Activated CD8-positive, alpha-beta T cell treated with anti-CD3 and anti-CD28 coated beads, Interleukin-2, amount 10 ng/mL, durations not matched to agents 7 days and 5 days (primary cell): ENCODE measurements at regions of chr5 and their contacts with region 1.

Region 1: DNA sequence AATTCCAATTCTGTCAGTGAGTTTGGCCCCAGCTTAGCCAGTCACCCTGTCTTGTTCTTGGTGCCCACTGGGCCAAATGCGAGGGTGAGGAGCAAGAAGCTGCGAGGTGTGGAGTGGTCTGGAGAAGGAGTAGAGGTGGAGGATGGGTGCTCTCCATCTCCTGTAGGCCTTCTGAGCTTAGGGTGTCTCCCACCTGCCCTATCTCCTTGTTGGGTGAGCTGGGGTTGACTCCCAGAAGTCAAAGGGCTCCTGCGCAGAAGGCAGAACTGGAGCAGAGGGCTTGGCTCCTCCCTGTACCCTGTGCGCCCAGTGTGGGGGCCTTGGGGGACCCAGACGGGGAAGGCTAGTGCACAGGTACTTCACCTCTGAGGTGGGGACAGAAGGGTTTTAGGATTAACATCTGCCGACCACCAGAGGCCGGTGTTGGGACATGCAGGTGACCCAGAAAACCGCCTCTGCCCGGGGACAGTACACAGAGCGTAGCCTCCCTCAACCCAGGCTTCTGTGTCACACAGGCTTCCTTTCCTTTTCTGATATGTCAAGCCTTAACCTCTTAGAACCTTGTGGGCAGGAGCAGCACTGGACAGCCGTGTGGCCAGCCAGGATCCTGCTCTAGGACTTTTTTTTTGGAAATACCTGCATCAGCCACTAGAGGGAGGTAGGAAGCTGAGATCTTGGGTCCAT is 16.9 kb downstream of the IL5 start:
- DNase-seq: peak; percentile 54
- ATAC-seq: peak; percentile 70
- H3K4me3 Mint-ChIP-seq: no peak overlapping the region
- H3K27ac Mint-ChIP-seq: peak overlapping the region; percentile 48
- H3K4me1 Mint-ChIP-seq: peaks cover 46% of the 10 kb centered on the region
- H3K27me3 Mint-ChIP-seq: no peaks in the 10 kb centered on the region

Region 2: GRCh38 chr5:132473019-132473531 is 53.4 kb before region 1 on chr5:
- CTCF ChIA-PET with region 1: no interaction called
- POLR2A ChIA-PET with region 1: no interaction called
- DNase-seq: peak; percentile 95
- ATAC-seq: peak; percentile 63
- H3K4me3 Mint-ChIP-seq: peak overlapping the region; percentile 42
- H3K27ac Mint-ChIP-seq: peak overlapping the region; percentile 94
- H3K4me1 Mint-ChIP-seq: peaks cover 92% of the 10 kb centered on the region
- H3K27me3 Mint-ChIP-seq: no peaks in the 10 kb centered on the region

Region 3: DNA sequence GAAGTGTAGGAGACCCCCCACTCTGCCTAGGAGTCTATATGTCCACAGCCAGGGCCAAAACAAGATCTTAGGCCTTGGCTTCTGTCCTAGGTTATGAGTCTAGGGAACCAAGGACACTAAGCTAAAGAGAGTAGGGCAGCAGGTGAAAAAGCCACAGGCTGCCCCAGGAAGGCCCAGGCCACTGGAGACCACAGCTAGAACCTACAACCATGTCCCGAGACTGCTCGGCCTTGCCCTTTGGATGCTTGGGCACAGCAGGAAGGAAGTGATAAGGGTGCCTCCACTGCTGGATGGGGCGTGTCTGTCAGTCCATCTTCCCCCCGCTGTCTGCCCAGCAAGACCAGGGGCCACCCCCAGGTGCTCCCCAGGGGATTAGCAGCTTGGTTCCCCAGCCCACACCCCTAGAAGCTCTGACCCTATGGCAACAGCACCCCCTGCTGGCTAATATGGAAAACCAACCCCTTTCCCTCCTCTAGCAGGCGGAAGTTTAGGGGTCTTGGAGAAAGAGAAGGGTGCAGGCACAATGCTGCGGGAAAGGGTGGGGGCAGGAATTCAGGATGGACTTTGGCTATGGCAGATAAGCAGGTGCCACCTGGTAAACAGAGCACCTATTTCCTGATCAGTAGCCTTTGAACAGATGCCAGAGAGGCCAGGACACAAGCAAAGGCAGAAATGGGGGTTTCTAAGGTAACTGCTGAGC is 25.4 kb before region 1 on chr5:
- CTCF ChIA-PET with region 1: interaction called, 15 read pairs
- POLR2A ChIA-PET with region 1: interaction called, 3 read pairs
- DNase-seq: peak; percentile 85
- ATAC-seq: peak; percentile 25
- H3K4me3 Mint-ChIP-seq: no peak overlapping the region
- H3K27ac Mint-ChIP-seq: peak overlapping the region; percentile 81
- H3K4me1 Mint-ChIP-seq: peaks cover 45% of the 10 kb centered on the region
- H3K27me3 Mint-ChIP-seq: peaks cover 5% of the 10 kb centered on the region

Region 4: GRCh38 chr5:132540764-132541163 is 14.3 kb after region 1 on chr5:
- CTCF ChIA-PET with region 1: interaction called, 27 read pairs
- POLR2A ChIA-PET with region 1: no interaction called
- DNase-seq: no peak
- ATAC-seq: no peak
- H3K4me3 Mint-ChIP-seq: no peak overlapping the region
- H3K27ac Mint-ChIP-seq: no peak overlapping the region
- H3K4me1 Mint-ChIP-seq: peaks cover 15% of the 10 kb centered on the region
- H3K27me3 Mint-ChIP-seq: peaks cover 3% of the 10 kb centered on the region

Region 5: DNA sequence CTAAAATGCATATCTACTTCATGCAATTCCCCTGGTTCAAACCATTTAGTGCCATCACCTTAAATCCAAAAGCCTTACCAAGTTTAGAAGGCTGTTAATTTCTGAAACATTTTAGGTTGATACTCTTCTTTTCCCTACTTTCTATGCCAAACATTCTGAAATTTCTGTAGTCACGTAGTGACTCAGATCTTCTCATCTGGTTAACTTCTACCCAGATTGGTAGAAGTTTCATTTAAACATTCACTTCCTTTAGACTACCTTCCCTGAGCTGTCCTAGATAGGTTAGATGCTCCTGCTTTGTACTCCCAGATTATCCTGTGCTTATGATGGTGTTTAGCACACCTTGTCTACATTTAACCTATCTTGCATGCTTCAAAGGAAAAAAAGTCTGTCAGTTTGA is 40.2 kb after region 1 on chr5:
- CTCF ChIA-PET with region 1: interaction called, 15 read pairs
- POLR2A ChIA-PET with region 1: no interaction called
- DNase-seq: no peak
- ATAC-seq: no peak
- H3K4me3 Mint-ChIP-seq: no peak overlapping the region
- H3K27ac Mint-ChIP-seq: peak overlapping the region; percentile 11
- H3K4me1 Mint-ChIP-seq: peaks cover 9% of the 10 kb centered on the region
- H3K27me3 Mint-ChIP-seq: no peaks in the 10 kb centered on the region

Region 6: DNA sequence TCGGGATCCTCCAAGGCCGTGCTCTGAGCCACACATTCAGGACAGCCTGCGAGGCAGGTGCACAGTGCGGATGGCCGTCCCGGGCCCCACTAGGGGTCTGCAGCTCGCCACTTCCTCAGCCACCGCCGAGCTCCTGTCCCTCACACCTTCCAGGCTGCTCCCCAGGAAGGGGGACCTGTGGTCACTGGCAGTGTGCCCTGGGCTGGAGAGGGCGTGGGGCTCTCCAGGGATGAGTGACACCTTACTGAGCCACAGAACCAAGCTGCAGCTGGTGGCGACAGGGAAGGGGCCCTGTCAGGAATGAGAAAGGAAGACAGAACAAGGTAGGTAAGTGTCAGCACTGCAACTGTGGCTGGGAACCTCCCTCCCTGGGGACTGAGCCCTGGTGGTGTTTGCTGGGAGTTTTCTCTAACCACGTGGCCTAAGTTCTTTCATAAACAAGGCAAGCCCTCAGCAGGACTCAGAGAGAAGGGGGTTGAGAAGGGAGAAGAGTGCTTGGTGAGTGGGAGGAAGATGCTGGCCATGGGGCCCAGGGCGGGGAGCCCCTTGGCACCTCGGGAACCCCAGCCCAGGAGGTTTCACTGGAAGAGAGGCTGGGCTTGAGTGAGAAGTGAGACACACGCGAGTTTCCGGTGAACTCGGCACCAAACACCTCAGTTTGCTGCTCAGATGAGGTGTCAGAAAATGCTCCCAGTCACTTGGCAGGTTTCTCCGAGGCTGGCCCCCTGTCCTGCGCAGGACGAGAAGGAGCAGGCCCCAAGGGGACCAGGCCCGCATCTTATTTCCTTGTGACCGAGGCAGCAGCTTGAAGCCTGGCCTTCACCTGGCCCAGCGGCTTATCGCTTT is 136.7 kb after region 1 on chr5:
- CTCF ChIA-PET with region 1: interaction called, 10 read pairs
- POLR2A ChIA-PET with region 1: no interaction called
- DNase-seq: peak; percentile 43
- ATAC-seq: peak; percentile 56
- H3K4me3 Mint-ChIP-seq: no peak overlapping the region
- H3K27ac Mint-ChIP-seq: peak overlapping the region; percentile 84
- H3K4me1 Mint-ChIP-seq: peaks cover 51% of the 10 kb centered on the region
- H3K27me3 Mint-ChIP-seq: no peaks in the 10 kb centered on the region

Region 7: GRCh38 chr5:132736853-132737833 is 210.7 kb after region 1 on chr5 and contains the start of gene KIF3A:
- CTCF ChIA-PET with region 1: interaction called, 15 read pairs
- POLR2A ChIA-PET with region 1: no interaction called
- DNase-seq: peak; percentile 99
- ATAC-seq: peak; percentile 94
- H3K4me3 Mint-ChIP-seq: peak within 1 kb of the TSS; percentile 86
- H3K27ac Mint-ChIP-seq: peak within 1 kb of the TSS; percentile 79
- H3K4me1 Mint-ChIP-seq: peaks cover 37% of the 10 kb centered on the region
- H3K27me3 Mint-ChIP-seq: peaks cover 8% of the 10 kb centered on the region
- total RNA-seq, gene KIF3A: 14.0 to 15.7 TPM

Region 8: DNA sequence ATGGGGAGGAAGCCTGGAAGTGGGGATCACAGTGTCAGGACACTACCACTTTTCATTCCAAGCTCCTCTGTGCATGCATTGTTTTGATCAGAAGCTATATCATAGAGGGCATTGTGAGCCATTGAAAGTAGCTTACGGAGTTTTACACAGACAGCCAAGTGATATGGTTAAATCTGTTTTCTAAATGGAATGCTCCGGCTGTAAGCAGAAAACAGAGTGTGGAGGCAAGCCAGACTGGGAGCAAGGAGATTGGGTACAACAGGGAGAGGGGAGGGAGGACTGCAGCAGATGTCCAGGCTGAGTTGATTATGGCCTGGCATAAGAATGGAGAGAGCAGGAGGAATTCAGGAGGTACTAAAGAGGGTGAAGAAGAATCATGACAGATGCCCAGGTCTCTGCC is 271.2 kb after region 1 on chr5:
- CTCF ChIA-PET with region 1: no interaction called
- POLR2A ChIA-PET with region 1: no interaction called
- DNase-seq: no peak
- ATAC-seq: no peak
- H3K4me3 Mint-ChIP-seq: no peak overlapping the region
- H3K27ac Mint-ChIP-seq: no peak overlapping the region
- H3K4me1 Mint-ChIP-seq: no peaks in the 10 kb centered on the region
- H3K27me3 Mint-ChIP-seq: peaks cover 45% of the 10 kb centered on the region

Region 9: GRCh38 chr5:132883261-132883834 is 356.9 kb after region 1 on chr5:
- CTCF ChIA-PET with region 1: interaction called, 10 read pairs
- POLR2A ChIA-PET with region 1: no interaction called
- DNase-seq: peak; percentile 48
- ATAC-seq: peak; percentile 67
- H3K4me3 Mint-ChIP-seq: no peak overlapping the region
- H3K27ac Mint-ChIP-seq: no peak overlapping the region
- H3K4me1 Mint-ChIP-seq: no peaks in the 10 kb centered on the region
- H3K27me3 Mint-ChIP-seq: no peaks in the 10 kb centered on the region